AG04450 (cell line): ENCODE measurements at regions of chr1 and their contacts with region 1.

Region 1: GRCh38 chr1:23496490-23497181 is 12.7 kb upstream of the ASAP3 start:
- DNase-seq: no peak
- H3K4me3 ChIP-seq: no peak overlapping the region
- H3K27ac ChIP-seq: no peak overlapping the region
- H3K27me3 ChIP-seq: peaks cover 3% of the 10 kb centered on the region
- CTCF ChIP-seq: no peak

Region 2: GRCh38 chr1:23484253-23485001 is 12.2 kb before region 1 on chr1:
- CTCF ChIA-PET with region 1: interaction called, 71 read pairs
- POLR2A ChIA-PET with region 1: interaction called, 7 read pairs
- DNase-seq: peak; percentile 74
- H3K4me3 ChIP-seq: peak overlapping the region; percentile 81
- H3K27ac ChIP-seq: peak overlapping the region; percentile 70
- H3K27me3 ChIP-seq: no peaks in the 10 kb centered on the region
- CTCF ChIP-seq: no peak

Region 3: DNA sequence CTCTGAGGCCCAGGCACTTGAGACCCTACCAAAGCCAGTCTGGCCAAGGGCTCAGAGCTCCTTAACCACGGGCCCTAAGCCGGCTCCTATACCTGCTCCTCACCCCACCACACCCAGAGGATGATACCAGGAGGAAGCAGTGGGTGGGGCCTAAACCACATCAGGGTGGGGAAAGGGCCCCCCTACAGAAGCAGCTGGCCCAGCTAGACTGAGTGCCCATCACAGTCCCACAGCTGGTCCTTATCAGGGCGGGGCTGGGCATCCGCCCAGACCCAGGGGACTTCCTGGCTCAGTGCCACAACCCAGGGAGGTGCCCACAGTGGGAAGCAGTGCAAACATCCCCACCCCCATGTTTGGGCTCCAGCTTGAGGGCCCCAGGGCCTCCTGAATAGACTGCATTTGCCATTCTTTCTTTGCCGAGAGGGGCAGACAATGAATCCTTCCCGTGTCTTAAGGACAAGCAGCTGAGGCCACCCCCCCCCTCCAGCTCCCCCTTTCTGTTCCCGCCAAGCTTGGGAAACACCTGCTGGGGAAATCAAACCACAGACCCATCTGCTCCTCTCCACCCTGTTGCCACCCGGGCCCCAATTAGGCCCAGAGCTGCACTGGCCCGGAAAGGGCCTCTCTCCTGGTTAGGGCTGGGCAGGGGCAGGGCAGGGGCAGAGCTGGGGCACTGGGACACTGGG is 28.2 kb after region 1 on chr1:
- CTCF ChIA-PET with region 1: interaction called, 19 read pairs
- POLR2A ChIA-PET with region 1: no interaction called
- DNase-seq: no peak
- H3K4me3 ChIP-seq: no peak overlapping the region
- H3K27ac ChIP-seq: no peak overlapping the region
- H3K27me3 ChIP-seq: no peaks in the 10 kb centered on the region
- CTCF ChIP-seq: no peak

Region 4: GRCh38 chr1:23539698-23540266 is 43.1 kb after region 1 on chr1:
- CTCF ChIA-PET with region 1: interaction called, 142 read pairs
- POLR2A ChIA-PET with region 1: interaction called, 4 read pairs
- DNase-seq: peak; percentile 70
- H3K4me3 ChIP-seq: no peak overlapping the region
- H3K27ac ChIP-seq: no peak overlapping the region
- H3K27me3 ChIP-seq: no peaks in the 10 kb centered on the region
- CTCF ChIP-seq: peak; percentile 96

Region 5: GRCh38 chr1:23691499-23692307 is 195.1 kb after region 1 on chr1 and contains the start of gene RPL11:
- CTCF ChIA-PET with region 1: interaction called, 11 read pairs
- POLR2A ChIA-PET with region 1: interaction called, 3 read pairs
- DNase-seq: peak; percentile 94
- H3K4me3 ChIP-seq: peak within 1 kb of the TSS; percentile 91
- H3K27ac ChIP-seq: peak within 1 kb of the TSS; percentile 87
- H3K27me3 ChIP-seq: no peaks in the 10 kb centered on the region
- CTCF ChIP-seq: peak; percentile 80
- polyA plus RNA-seq, gene RPL11: 1,898 and 2,055 TPM in 2 replicates